ENCODE measurements at regions of chr11 and their contacts with region 1.

Region 1: DNA sequence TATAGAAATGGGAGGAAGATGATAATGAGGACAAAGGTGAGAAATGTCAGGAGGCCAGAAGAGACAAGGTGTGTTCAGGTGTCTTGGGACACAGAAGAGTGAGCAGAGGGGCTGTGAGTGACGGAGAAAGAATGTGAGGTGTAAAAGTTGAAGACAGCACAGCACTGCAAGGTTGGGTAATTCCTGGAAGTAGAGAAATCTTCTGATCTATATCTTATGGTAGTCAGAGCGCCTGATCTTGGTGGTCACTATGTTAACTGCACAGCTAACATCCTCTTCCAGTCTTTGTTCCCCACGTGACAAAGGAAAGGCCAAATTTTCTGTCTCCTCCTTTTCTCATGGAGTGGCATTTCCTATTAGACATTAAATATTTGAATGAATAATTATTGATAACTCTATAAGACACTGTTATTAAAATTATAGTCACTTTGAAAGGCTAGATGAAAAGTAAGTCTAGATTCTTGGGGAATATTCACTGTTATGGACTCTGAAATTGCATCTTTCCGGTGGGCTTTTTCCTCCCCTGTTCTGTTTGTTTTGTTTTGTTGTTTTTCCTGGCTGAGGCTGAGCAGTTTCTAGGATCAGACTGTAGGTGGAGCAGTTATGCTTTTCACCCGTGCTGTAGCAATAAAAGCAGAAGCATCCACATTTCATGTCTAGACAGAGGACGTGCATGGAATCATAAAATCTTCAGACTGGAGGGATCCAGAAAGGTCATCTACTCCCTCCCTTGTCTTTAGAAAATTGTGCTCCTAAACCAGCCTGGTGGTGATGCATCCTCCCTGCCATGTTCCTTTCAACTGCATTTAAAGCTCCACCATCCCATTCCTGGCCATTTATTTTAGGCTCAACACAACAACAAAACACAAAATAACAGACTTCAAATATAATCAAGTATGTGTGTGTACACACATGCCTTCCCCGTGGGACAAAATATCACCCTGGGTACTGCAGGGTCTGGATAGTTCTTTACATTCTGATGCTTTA is 26.6 kb downstream of the SC5D start:
- DNase-seq: peak; percentile 29
- H3K4me3 Mint-ChIP-seq: no peak overlapping the region
- H3K27ac Mint-ChIP-seq: no peak overlapping the region
- H3K4me1 Mint-ChIP-seq: peaks cover 15% of the 10 kb centered on the region
- H3K27me3 Mint-ChIP-seq: no peaks in the 10 kb centered on the region

Region 2: DNA sequence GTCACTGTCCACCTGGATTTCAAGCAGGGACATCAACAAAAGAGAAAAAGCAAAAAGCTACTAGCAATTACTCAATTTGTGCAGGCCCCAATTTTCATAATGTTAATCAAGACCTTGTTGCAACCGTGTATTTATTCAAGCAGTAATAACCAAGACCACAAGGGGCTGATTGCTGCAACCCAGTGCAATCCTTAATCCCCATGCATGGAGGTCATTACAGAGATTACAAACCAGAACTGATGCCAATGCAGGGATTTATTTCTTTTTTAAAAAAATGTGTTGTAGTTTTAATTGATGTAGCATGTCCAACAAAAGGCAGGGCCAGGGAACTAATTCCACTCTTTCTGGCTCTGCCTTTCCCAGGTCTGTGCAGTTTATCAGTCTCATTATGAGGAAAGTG is 199.7 kb before region 1 on chr11:
- CTCF ChIA-PET with region 1: no interaction called
- POLR2A ChIA-PET with region 1: no interaction called
- intact Hi-C with region 1: no loop called
- DNase-seq: no peak
- H3K4me3 Mint-ChIP-seq: no peak overlapping the region
- H3K27ac Mint-ChIP-seq: no peak overlapping the region
- H3K4me1 Mint-ChIP-seq: no peaks in the 10 kb centered on the region
- H3K27me3 Mint-ChIP-seq: no peaks in the 10 kb centered on the region

Region 3: DNA sequence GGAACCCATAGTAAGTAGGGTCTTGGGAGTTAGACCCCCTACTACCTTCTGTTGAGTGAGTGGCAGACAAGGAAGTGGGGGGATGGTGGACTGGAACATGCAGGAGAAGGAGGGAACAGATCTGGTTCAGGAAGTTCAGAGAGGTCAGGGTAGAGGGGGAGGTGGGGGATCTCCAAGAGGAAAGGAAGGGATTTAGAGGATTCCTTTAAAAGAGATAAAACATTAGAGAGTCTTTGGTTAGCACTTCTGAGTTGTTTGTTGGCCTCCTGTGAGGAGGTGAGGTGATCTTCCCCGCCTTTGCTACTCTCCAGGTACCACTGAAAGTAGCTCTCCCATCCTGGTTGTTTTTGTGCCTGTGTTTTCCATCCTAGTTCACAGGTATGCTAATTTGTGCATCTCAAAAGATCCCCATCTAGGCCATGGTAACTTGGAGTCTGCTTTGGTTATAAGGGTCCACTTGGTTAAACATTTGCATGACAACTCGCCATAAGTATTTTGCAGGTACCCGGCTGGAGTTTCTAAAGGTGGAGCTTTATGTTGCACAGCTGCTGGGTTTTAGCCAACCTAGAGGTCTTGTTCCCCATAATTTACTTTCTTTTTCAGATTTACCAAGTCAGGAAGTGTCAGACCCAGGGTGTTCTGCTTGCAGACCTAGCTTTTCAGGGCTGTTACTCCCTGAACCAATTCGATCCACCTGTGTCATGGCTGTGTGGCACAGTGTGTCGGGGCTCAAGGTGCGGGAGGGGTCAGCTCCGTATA is 53.7 kb after region 1 on chr11:
- CTCF ChIA-PET with region 1: no interaction called
- POLR2A ChIA-PET with region 1: no interaction called
- intact Hi-C with region 1: loop called (anchors 10 kb)
- DNase-seq: no peak
- H3K4me3 Mint-ChIP-seq: no peak overlapping the region
- H3K27ac Mint-ChIP-seq: no peak overlapping the region
- H3K4me1 Mint-ChIP-seq: peaks cover 61% of the 10 kb centered on the region
- H3K27me3 Mint-ChIP-seq: no peaks in the 10 kb centered on the region

Region 4: GRCh38 chr11:121417055-121417551 is 98.0 kb after region 1 on chr11:
- CTCF ChIA-PET with region 1: interaction called, 3 read pairs
- POLR2A ChIA-PET with region 1: no interaction called
- intact Hi-C with region 1: loop called (anchors 2 kb)
- DNase-seq: peak; percentile 81
- H3K4me3 Mint-ChIP-seq: no peak overlapping the region
- H3K27ac Mint-ChIP-seq: peak overlapping the region; percentile 85
- H3K4me1 Mint-ChIP-seq: peaks cover 66% of the 10 kb centered on the region
- H3K27me3 Mint-ChIP-seq: no peaks in the 10 kb centered on the region

Region 5: GRCh38 chr11:121591405-121592033 is 272.4 kb after region 1 on chr11:
- CTCF ChIA-PET with region 1: interaction called, 28 read pairs
- POLR2A ChIA-PET with region 1: no interaction called
- intact Hi-C with region 1: loop called (anchors 1 kb)
- DNase-seq: peak; percentile 76
- H3K4me3 Mint-ChIP-seq: no peak overlapping the region
- H3K27ac Mint-ChIP-seq: peak overlapping the region; percentile 52
- H3K4me1 Mint-ChIP-seq: peaks cover 25% of the 10 kb centered on the region
- H3K27me3 Mint-ChIP-seq: no peaks in the 10 kb centered on the region

Region 6: GRCh38 chr11:122108192-122108799 is 789.2 kb after region 1 on chr11:
- CTCF ChIA-PET with region 1: no interaction called
- POLR2A ChIA-PET with region 1: no interaction called
- intact Hi-C with region 1: loop called (anchors 10 kb)
- DNase-seq: peak; percentile 11
- H3K4me3 Mint-ChIP-seq: no peak overlapping the region
- H3K27ac Mint-ChIP-seq: no peak overlapping the region
- H3K4me1 Mint-ChIP-seq: no peaks in the 10 kb centered on the region
- H3K27me3 Mint-ChIP-seq: peaks cover 11% of the 10 kb centered on the region